Activated B cell treated with CpG ODN at 0.5 μM for 24 hours (primary cell): ENCODE measurements at regions of chr5 and their contacts with region 1.

Region 1: DNA sequence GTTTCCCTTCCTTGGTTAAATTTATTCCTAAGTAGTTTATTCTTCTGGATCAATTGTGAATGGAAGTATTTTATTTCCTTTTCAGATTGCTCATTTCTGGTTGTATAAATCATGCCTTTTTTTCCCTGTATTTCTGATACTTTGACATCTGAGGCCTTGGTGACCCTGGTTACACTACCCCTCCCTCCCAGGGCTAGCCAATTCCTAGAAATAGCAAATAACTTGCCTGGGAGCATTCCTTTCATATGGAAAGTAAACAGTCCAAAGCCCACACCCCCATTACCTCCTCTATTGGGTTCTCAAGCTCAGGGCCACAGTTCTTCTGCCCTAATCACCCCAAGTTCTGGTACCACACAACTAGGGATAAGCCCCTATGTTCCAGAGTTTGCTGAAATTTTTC is 71.8 kb downstream of the CCDC192 start:
- DNase-seq: no peak
- ATAC-seq: no peak
- H3K4me3 Mint-ChIP-seq: no peak overlapping the region
- H3K27ac Mint-ChIP-seq: no peak overlapping the region
- H3K4me1 Mint-ChIP-seq: no peaks in the 10 kb centered on the region
- H3K27me3 Mint-ChIP-seq: no peaks in the 10 kb centered on the region
- CTCF ChIP-seq: no peak

Region 2: DNA sequence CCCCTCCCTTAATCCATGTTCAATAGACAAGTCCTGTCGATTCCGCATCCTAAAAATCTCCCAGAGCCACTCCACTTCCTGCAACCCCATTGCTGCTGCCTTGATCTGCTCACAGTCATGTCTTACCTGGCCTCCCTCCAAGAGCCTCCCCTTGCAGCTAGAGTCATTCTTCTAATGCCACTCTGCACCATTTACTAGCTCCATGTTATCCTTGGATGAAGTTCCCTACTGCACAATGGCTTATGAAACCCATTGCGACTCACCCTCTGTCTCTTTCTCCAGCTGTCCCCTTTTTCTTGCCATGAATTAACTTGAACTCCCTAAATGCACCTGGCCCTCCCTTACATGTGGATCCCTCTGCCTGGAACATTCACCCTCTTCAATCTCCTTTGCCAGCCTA is 444.8 kb before region 1 on chr5:
- CTCF ChIA-PET with region 1: no interaction called
- POLR2A ChIA-PET with region 1: no interaction called
- intact Hi-C with region 1: no loop called
- DNase-seq: no peak
- ATAC-seq: no peak
- H3K4me3 Mint-ChIP-seq: no peak overlapping the region
- H3K27ac Mint-ChIP-seq: no peak overlapping the region
- H3K4me1 Mint-ChIP-seq: no peaks in the 10 kb centered on the region
- H3K27me3 Mint-ChIP-seq: peaks cover 22% of the 10 kb centered on the region
- CTCF ChIP-seq: no peak

Region 3: GRCh38 chr5:127615916-127616315 is 159.0 kb before region 1 on chr5:
- CTCF ChIA-PET with region 1: no interaction called
- POLR2A ChIA-PET with region 1: no interaction called
- intact Hi-C with region 1: no loop called
- DNase-seq: no peak
- ATAC-seq: no peak
- H3K4me3 Mint-ChIP-seq: no peak overlapping the region
- H3K27ac Mint-ChIP-seq: no peak overlapping the region
- H3K4me1 Mint-ChIP-seq: no peaks in the 10 kb centered on the region
- H3K27me3 Mint-ChIP-seq: peaks cover 2% of the 10 kb centered on the region
- CTCF ChIP-seq: no peak

Region 4: DNA sequence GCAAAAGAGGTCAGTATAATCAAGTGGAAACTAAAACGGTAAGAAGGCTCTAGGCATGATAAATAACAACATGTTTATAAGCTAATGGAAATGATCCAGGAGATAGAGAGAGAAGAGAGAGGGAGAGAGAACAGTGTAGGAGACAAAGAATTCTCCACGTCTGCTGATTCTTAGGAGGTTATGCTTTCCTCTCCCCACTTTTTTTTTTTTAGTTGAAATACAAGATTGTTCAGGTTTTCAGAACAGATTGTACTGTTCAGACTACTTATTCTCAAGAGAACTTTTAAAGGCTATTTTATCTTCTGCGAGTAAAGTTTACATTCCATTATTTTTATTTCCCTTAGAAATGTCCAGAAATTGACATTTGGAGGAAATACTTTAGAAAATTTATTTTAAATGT is 67.8 kb before region 1 on chr5:
- CTCF ChIA-PET with region 1: no interaction called
- POLR2A ChIA-PET with region 1: no interaction called
- intact Hi-C with region 1: no loop called
- DNase-seq: no peak
- ATAC-seq: no peak
- H3K4me3 Mint-ChIP-seq: no peak overlapping the region
- H3K27ac Mint-ChIP-seq: no peak overlapping the region
- H3K4me1 Mint-ChIP-seq: no peaks in the 10 kb centered on the region
- H3K27me3 Mint-ChIP-seq: peaks cover 2% of the 10 kb centered on the region
- CTCF ChIP-seq: no peak

Region 5: GRCh38 chr5:127826011-127826410 is 51.0 kb after region 1 on chr5:
- CTCF ChIA-PET with region 1: no interaction called
- POLR2A ChIA-PET with region 1: no interaction called
- intact Hi-C with region 1: no loop called
- DNase-seq: no peak
- ATAC-seq: no peak
- H3K4me3 Mint-ChIP-seq: no peak overlapping the region
- H3K27ac Mint-ChIP-seq: no peak overlapping the region
- H3K4me1 Mint-ChIP-seq: no peaks in the 10 kb centered on the region
- H3K27me3 Mint-ChIP-seq: peaks cover 6% of the 10 kb centered on the region
- CTCF ChIP-seq: no peak

Region 6: DNA sequence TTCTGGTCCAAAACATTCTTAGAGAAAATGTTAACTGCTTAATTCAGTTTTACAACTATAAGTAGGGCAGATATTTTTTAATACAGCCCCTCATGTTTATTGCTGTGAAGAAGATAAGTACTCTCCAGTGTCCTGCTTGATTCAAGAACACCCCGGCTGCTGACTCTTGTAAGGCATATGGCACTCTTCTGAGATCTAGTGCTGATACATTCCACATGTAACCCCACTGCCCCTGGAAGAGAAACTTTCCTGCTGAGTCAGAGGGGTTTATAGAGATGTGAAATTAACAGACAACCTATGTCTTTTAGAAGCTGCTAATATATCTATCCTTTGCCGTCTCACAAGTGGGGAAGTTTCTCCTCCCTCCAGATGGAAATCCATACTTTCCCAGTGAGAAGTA is 1971.9 kb after region 1 on chr5:
- CTCF ChIA-PET with region 1: no interaction called
- POLR2A ChIA-PET with region 1: no interaction called
- intact Hi-C with region 1: loop called (anchors 5 kb)
- DNase-seq: no peak
- ATAC-seq: no peak
- H3K4me3 Mint-ChIP-seq: no peak overlapping the region
- H3K27ac Mint-ChIP-seq: no peak overlapping the region
- H3K4me1 Mint-ChIP-seq: no peaks in the 10 kb centered on the region
- H3K27me3 Mint-ChIP-seq: no peaks in the 10 kb centered on the region
- CTCF ChIP-seq: no peak